IMR-90 (cell line): ENCODE measurements at regions of chr12 and their contacts with region 1.

Region 1: GRCh38 chr12:57904848-57905811 is 36.2 kb upstream of the ATP23 start:
- DNase-seq: peak; percentile 88
- ATAC-seq: peak; percentile 97
- H3K4me3 ChIP-seq: no peak overlapping the region
- H3K27ac ChIP-seq: no peak overlapping the region
- H3K4me1 ChIP-seq: peaks cover 3% of the 10 kb centered on the region
- H3K27me3 ChIP-seq: peaks cover 24% of the 10 kb centered on the region
- CTCF ChIP-seq: peak; percentile 100; the same call in 1 of the 2 replicates
- POLR2A ChIP-seq: peak; percentile 64
- RAD21 ChIP-seq: peak; percentile 100

Region 2: DNA sequence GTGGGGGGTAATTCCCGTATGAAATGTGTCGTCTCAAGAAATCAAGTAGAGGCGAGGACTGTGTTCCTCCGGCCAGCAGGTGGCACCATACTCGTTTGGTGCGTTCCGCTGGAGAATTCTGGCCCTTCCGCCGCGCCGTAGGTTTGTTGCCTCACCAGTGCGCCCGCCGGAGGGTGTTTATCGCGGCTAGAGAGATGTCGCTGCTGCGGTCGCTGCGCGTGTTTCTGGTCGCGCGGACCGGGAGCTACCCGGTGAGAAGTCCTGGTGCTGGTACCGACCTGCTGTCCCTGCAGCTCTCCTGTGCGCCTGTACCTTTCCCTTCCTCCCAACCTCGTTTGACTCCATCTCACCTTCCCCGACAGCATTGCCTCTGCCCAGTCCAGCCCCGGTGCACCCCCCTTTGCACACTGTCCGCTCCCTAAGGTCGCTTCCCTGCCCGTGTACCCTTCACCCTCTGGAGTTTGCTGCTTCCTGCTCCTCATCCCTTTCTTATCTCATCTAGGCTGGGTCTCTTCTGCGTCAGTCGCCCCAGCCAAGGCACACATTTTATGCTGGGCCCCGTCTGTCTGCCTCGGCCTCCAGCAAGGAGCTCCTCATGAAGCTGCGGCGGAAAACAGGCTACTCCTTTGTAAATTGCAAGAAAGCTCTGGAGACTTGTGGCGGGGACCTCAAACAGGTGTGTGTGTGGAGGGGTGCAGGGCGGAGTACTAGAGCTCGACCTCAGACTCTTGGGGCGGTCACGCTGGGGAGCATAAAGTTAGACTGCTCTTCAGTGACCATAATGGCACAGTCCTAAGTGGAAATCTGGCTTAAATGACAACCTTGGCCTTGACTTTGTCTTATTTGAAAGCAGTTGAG is 122.3 kb before region 1 on chr12 and contains the start of gene TSFM:
- CTCF ChIA-PET with region 1: no interaction called
- POLR2A ChIA-PET with region 1: no interaction called
- dilution Hi-C with region 1: no loop called
- in situ Hi-C with region 1: no loop called
- intact Hi-C with region 1: loop called (anchors 1 kb)
- DNase-seq: peak; percentile 93
- ATAC-seq: peak; percentile 98
- H3K4me3 ChIP-seq: peak within 1 kb of the TSS; percentile 94
- H3K27ac ChIP-seq: peak within 1 kb of the TSS; percentile 73
- H3K4me1 ChIP-seq: 0 out of 2 replicates have a peak, but pooled peaks cover 2% of the 10 kb centered on the region
- H3K27me3 ChIP-seq: no peaks in the 10 kb centered on the region
- CTCF ChIP-seq: peak; percentile 97
- POLR2A ChIP-seq: peak; percentile 61
- RAD21 ChIP-seq: peak; percentile 50
- total RNA-seq, gene TSFM: 10.8 and 11.5 TPM in 2 replicates

Region 3: DNA sequence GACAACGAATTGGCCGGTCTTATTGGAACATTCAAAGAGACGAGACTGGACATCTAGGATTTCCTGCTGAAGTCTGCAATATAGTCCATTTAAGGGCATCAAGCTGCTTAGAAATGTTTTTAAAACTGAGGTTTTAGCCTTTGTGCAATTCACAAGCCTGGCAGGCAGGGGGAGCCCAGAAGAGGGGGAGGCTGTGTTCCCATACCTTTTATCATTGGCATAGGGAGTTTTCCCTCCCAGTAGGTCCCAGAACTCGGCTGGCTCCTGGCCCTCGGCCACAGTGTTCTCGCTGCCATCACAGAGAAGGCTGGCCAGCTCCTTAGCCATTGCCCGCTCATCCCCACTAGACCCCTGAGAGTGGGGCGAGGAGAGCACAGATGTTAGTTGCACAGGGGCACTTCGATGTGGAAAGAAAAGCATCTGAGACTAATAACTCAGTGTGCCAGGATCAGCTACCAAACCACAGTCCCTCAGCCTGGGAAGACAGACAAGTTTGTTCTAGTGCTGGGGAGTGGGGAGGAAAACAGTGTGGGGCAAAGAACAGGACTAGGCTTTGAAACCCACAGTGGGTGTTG is 101.7 kb before region 1 on chr12:
- CTCF ChIA-PET with region 1: interaction called, 13 read pairs
- POLR2A ChIA-PET with region 1: interaction called, 3 read pairs
- dilution Hi-C with region 1: no loop called
- in situ Hi-C with region 1: no loop called
- intact Hi-C with region 1: loop called (anchors 1 kb)
- DNase-seq: peak; percentile 42
- ATAC-seq: peak; percentile 92
- H3K4me3 ChIP-seq: no peak overlapping the region
- H3K27ac ChIP-seq: no peak overlapping the region
- H3K4me1 ChIP-seq: no peaks in the 10 kb centered on the region
- H3K27me3 ChIP-seq: no peaks in the 10 kb centered on the region
- CTCF ChIP-seq: peak; percentile 83
- POLR2A ChIP-seq: no peak
- RAD21 ChIP-seq: peak; percentile 71

Region 4: DNA sequence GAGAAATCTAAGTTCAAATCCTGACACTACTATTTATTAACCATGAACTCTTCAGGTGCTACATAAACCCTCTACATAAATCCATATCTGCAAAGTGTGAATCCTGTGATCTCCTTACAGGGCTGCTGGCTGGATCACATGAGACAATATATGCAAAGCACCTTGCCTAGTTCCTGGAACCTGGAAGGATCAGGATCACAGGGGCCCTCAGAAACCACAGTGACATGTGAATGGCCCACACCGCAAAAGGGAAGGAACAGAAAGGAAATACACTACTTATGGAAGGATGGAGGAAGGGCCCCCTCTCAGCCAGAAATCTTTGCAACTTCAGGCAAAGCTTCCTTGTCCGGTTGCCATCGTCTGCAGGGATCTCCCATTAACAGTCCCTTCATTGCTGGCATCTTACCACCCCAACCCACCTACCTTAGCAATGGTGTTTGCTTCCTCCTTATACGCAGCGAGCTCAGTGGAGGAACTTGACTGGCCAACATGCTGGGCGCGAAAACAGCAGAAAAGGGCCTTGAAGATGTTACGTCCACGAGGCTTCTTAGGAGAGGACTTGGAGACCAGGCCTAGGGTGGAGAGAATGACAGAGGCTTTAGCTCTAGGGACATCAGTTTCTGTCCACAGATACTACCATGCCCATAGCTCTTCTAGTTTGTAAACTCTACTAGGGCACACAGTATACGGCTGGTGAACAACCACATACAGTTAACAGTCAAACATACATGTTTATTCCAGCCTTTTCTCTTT is 75.9 kb before region 1 on chr12:
- CTCF ChIA-PET with region 1: interaction called, 4 read pairs
- POLR2A ChIA-PET with region 1: no interaction called
- dilution Hi-C with region 1: no loop called
- in situ Hi-C with region 1: loop called (anchors 5 kb)
- intact Hi-C with region 1: loop called (anchors 1 kb)
- DNase-seq: no peak
- ATAC-seq: peak; percentile 7; the same call in 1 of the 2 replicates
- H3K4me3 ChIP-seq: no peak overlapping the region
- H3K27ac ChIP-seq: no peak overlapping the region; the same call in 1 of the 2 replicates
- H3K4me1 ChIP-seq: peaks cover 31% of the 10 kb centered on the region
- H3K27me3 ChIP-seq: no peaks in the 10 kb centered on the region
- CTCF ChIP-seq: no peak
- POLR2A ChIP-seq: no peak
- RAD21 ChIP-seq: no peak

Region 5: GRCh38 chr12:57836442-57837375 is 68.4 kb before region 1 on chr12:
- CTCF ChIA-PET with region 1: interaction called, 9 read pairs
- POLR2A ChIA-PET with region 1: no interaction called
- dilution Hi-C with region 1: no loop called
- in situ Hi-C with region 1: no loop called
- intact Hi-C with region 1: loop called (anchors 1 kb)
- DNase-seq: peak; percentile 86
- ATAC-seq: peak; percentile 66
- H3K4me3 ChIP-seq: no peak overlapping the region
- H3K27ac ChIP-seq: peak overlapping the region; percentile 77
- H3K4me1 ChIP-seq: peaks cover 66% of the 10 kb centered on the region
- H3K27me3 ChIP-seq: no peaks in the 10 kb centered on the region
- CTCF ChIP-seq: no peak
- POLR2A ChIP-seq: no peak
- RAD21 ChIP-seq: no peak

Region 6: DNA sequence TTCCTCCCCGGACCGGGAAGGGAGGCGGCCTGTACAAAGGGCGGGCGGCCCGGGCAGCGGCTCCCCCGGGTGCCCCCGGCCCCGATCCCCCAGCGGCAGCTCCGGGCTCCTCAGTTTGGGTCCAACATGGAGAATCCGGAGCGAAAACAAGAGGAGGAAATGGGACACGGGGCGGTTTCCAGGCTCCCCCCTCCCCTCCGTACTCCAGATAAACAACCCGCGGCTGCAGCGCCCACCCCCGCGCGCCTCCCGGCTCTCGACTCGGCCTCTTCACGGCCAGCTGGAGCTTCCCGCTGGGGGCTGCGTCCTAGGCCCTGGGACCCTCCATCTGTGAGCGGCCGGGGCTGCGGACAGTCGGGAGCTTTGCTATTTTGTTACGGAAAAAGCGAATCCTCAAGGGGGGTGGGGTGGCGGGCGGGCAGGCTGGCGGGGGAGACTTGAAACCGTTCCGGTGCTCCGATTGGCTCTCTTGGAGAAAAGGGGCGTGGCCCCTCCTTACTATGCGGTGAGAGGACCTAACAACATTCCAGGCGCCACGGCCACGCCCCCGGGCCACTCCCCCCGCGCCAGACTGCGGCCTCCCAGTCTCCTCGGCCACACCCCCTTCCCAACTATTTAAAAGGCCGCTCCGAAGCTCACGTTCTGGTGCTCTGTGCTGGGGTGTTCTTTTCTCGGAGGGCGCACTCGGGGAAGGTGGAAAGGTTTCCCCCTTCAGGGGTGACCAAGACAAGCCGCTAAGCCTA is 58.4 kb before region 1 on chr12 and contains the start of gene CTDSP2:
- CTCF ChIA-PET with region 1: no interaction called
- POLR2A ChIA-PET with region 1: interaction called, 3 read pairs
- dilution Hi-C with region 1: no loop called
- in situ Hi-C with region 1: no loop called
- intact Hi-C with region 1: loop called (anchors 1 kb)
- DNase-seq: peak; percentile 98
- ATAC-seq: peak; percentile 81
- H3K4me3 ChIP-seq: peak within 1 kb of the TSS; percentile 99
- H3K27ac ChIP-seq: peak within 1 kb of the TSS; percentile 99
- H3K4me1 ChIP-seq: peaks cover 16% of the 10 kb centered on the region
- H3K27me3 ChIP-seq: no peaks in the 10 kb centered on the region; the same call in 1 of the 2 replicates
- CTCF ChIP-seq: no peak
- POLR2A ChIP-seq: peak; percentile 62; the same call in 1 of the 2 replicates
- RAD21 ChIP-seq: no peak
- total RNA-seq, gene CTDSP2: 79.4 and 114 TPM in 2 replicates